ENCODE measurements at regions of chrX and their contacts with region 1.

Region 1: GRCh38 chrX:100674705-100675104 is 30.7 kb downstream of the SRPX2 start:
- DNase-seq: no peak
- ATAC-seq: no peak
- H3K4me3 ChIP-seq: no peak overlapping the region
- H3K27ac ChIP-seq: no peak overlapping the region
- H3K4me1 ChIP-seq: no peaks in the 10 kb centered on the region
- CTCF ChIP-seq: no peak
- EP300 ChIP-seq: no peak
- POLR2A ChIP-seq: no peak
- RAD21 ChIP-seq: no peak

Region 2: DNA sequence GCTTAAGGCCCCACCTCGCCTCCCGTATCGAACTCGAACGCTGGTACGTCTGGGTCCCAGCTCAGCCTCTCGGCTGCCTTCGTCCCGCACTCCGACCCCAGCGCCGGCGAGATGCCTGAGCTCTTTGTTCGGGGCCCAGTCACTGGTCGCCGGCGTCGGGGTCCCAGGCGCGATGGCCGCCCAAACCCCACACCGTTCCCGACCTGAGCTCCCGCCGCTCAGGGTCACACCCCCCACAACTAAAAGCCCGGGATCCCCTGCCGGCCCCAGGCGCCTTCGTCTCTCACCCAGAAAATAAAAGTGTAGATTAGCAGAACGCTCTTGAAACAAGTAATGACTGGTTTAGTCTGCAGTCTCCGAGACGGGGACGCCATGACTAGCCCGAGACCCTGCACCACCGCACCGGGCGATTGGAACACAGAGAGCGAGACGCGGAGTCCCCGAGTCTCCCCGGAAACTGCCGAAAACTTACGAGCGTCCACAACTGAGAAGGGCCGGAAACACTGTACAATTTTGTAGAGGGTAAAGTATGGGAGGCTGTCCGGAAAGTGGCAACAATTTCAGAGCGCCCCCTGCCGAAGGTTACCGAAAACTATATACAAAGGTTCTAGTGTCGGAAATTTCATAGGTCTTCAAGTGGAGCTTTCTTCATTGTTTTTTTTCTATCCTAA is 38.2 kb before region 1 on chrX and contains the start of gene TSPAN6:
- CTCF ChIA-PET with region 1: interaction called, 12 read pairs
- POLR2A ChIA-PET with region 1: no interaction called
- DNase-seq: peak; percentile 87 to 91
- ATAC-seq: peak; percentile 100
- H3K4me3 ChIP-seq: peak within 1 kb of the TSS; percentile 79
- H3K27ac ChIP-seq: peak within 1 kb of the TSS; percentile 81 to 92
- H3K4me1 ChIP-seq: peaks cover 8% of the 10 kb centered on the region; the same call in 2 of the 3 replicates
- CTCF ChIP-seq: peak; percentile 69
- EP300 ChIP-seq: no peak
- POLR2A ChIP-seq: peak; percentile 54
- RAD21 ChIP-seq: peak; percentile 31 to 45; a peak in 2 of 5 replicates
- polyA plus RNA-seq, gene TSPAN6: 61.4 and 71.1 TPM in 2 replicates

Region 3: DNA sequence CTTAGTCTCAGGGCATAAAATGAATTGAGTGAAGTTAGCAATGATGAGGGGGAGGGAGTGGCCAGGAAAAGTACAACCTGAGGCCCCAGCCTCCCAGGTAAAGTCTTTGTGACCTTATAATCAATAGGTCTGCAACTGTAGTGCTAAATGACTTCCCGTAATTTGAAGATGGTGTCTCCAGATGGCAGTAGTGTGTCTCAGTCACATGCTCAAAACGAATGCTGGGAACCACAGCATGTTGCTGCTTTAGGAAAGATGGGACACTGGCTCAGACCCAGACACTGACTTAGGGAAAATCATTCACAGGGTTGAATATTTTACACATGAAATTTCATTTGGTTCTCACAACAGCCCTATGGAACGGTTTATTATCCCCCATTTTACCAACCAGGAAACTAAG is 20.4 kb before region 1 on chrX:
- CTCF ChIA-PET with region 1: interaction called, 36 read pairs
- POLR2A ChIA-PET with region 1: no interaction called
- DNase-seq: peak; percentile 18 to 47
- ATAC-seq: peak; percentile 63 to 85; a peak in 5 of 6 replicates
- H3K4me3 ChIP-seq: no peak overlapping the region
- H3K27ac ChIP-seq: 0 out of 6 replicates have a peak overlapping the region, but pooled peaks of 1 of the 2 experiments have one; percentile 26
- H3K4me1 ChIP-seq: peaks cover 11% of the 10 kb centered on the region
- CTCF ChIP-seq: peak; percentile 38; the same call in 2 of the 3 replicates
- EP300 ChIP-seq: no peak
- POLR2A ChIP-seq: no peak
- RAD21 ChIP-seq: no peak

Region 4: DNA sequence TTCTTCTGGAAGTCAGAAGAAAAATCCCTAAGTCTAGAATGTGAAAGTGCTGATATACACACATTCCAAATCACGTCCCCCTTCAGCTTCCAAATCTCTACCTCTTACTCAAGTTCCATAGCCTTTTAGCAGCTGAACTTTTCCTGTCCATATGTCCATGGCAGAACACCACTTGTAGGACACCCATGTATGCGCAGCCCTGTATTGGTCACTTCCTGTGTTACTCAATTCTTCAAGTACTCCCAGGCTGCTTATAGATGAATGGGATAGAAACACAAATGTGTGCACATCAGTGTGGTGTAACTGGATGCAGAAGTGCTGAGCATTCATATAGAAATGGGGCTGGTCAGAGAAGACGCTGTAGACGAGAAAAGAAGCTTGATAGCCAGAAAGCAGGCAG is 11.9 kb before region 1 on chrX:
- CTCF ChIA-PET with region 1: interaction called, 15 read pairs
- POLR2A ChIA-PET with region 1: no interaction called
- DNase-seq: no peak
- ATAC-seq: no peak
- H3K4me3 ChIP-seq: no peak overlapping the region
- H3K27ac ChIP-seq: no peak overlapping the region
- H3K4me1 ChIP-seq: no peaks in the 10 kb centered on the region
- CTCF ChIP-seq: no peak
- EP300 ChIP-seq: no peak
- POLR2A ChIP-seq: no peak
- RAD21 ChIP-seq: no peak

Region 5: DNA sequence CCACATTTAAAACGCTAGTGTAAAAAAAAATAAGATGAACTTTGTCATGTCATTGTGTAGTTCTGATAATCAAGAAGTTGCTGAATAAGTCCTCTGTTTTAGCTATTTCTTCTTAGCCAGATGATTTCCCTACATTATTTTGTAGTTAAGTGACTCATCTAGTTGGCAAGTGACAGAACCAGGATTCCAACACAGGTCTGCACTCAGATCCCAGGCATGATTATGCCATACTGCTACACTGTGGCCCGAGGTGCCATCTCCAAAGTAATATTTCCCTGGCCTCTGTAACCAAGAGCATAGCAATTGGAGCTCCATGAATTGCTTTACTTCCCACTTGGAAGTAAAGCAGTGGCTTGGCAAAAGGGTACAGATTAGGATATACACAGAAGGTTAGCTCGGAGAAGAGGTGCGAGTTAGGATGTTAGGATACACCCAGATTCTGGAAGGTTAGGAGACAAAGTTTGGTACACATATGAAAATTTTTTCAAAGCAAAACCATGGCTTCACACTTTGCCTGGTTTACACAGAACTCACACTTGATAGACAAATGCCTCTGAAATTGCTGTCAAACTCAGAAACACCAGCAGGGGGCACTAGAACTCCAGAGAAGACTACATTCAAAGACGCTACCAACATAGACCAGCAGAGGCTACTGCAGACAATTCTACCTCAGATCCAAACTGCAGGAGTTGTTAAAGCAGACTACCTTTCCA is 10.7 kb after region 1 on chrX:
- CTCF ChIA-PET with region 1: interaction called, 42 read pairs
- POLR2A ChIA-PET with region 1: no interaction called
- DNase-seq: peak; percentile 55 to 78
- ATAC-seq: peak; percentile 95 to 98
- H3K4me3 ChIP-seq: no peak overlapping the region
- H3K27ac ChIP-seq: no peak overlapping the region
- H3K4me1 ChIP-seq: no peaks in the 10 kb centered on the region
- CTCF ChIP-seq: peak; percentile 92
- EP300 ChIP-seq: no peak
- POLR2A ChIP-seq: no peak
- RAD21 ChIP-seq: peak; percentile 92 to 94

Measured in A549 (cell line).